Heart left ventricle (tissue), 16 donors: ENCODE measurements at regions of chr4 and their contacts with region 1.

Region 1: GRCh38 chr4:69126024-69126423 is 29.8 kb downstream of the UGT2B7 start:
- DNase-seq: no peak
- ATAC-seq: no peak
- H3K4me3 ChIP-seq: no peak overlapping the region
- H3K27ac ChIP-seq: no peak overlapping the region
- H3K4me1 ChIP-seq: no peaks in the 10 kb centered on the region
- H3K27me3 ChIP-seq: no peaks in the 10 kb centered on the region
- CTCF ChIP-seq: no peak
- POLR2A ChIP-seq: no peak

Region 2: DNA sequence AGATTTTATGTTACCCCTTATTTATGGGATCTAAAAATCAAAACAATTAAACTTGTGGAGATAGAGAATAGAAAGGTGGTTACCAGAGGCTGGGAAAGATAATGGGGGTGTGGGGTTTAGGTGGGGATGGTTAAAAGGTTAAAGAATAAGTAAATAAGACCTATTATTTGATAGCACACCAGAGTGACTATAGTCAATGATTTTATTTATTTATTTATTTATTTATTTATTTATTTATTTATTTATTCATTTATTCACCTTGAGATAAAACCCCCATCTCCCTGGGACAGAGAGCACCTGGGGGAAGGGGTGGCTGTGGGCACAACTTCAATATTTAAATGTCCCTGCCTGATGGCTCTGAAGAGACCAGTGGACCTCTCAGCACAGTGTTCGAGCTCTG is 240.5 kb before region 1 on chr4:
- intact Hi-C with region 1: loop called in 1 of 10 experiments (anchors 5 kb)
- DNase-seq: no peak
- ATAC-seq: no peak
- H3K4me3 ChIP-seq: no peak overlapping the region
- H3K27ac ChIP-seq: no peak overlapping the region
- H3K4me1 ChIP-seq: no peaks in the 10 kb centered on the region
- H3K27me3 ChIP-seq: no peaks in the 10 kb centered on the region
- CTCF ChIP-seq: no peak
- POLR2A ChIP-seq: no peak

Region 3: GRCh38 chr4:69697536-69698242 is 571.7 kb after region 1 on chr4:
- intact Hi-C with region 1: no loop called
- DNase-seq: no peak
- ATAC-seq: no peak
- H3K4me3 ChIP-seq: no peak overlapping the region
- H3K27ac ChIP-seq: no peak overlapping the region
- H3K4me1 ChIP-seq: no peaks in the 10 kb centered on the region
- H3K27me3 ChIP-seq: no peaks in the 10 kb centered on the region
- CTCF ChIP-seq: no peak
- POLR2A ChIP-seq: no peak